ENCODE measurements at regions of chr1 and their contacts with region 1.

Region 1: DNA sequence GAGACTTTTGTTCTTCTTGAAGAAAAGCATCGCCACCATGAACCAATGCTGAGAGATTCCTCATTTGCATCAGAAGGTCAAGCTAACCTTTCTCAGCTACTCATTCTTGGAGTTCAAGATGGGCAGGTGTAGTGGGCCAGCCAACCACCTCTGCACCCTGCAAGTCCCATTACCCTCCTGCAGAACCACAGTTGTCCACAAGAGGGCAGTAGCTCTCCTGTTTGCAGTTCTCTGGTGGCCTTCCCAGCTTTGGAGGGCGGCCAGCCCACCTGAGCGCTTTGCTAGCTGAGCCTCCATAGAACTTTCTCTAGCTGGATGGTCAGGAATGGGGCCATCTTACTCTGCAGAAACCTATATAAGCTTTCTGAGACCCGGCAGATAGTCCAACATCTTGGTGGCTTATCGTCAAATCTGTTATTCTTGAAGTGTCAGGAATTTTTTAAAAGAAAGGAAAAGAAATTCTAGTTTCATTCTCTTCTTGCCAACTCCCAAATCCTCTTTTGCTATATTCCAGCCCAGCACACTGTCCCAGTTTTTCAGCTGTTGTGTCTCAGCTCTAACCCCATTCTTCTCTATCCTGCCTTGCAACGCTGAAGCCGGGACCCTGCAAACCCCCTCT is 11.0 kb upstream of the LMX1A start:
- DNase-seq: peak; percentile 90
- ATAC-seq: no peak

Region 2: GRCh38 chr1:164958982-164959768 is 408.3 kb before region 1 on chr1:
- intact Hi-C with region 1: no loop called
- DNase-seq: no peak
- ATAC-seq: peak; percentile 56

Region 3: GRCh38 chr1:165144757-165145397 is 222.6 kb before region 1 on chr1:
- intact Hi-C with region 1: loop called (anchors 5 kb)
- DNase-seq: peak; percentile 71
- ATAC-seq: peak; percentile 76